ENCODE measurements at regions of chr5 and their contacts with region 1.

Region 1: DNA sequence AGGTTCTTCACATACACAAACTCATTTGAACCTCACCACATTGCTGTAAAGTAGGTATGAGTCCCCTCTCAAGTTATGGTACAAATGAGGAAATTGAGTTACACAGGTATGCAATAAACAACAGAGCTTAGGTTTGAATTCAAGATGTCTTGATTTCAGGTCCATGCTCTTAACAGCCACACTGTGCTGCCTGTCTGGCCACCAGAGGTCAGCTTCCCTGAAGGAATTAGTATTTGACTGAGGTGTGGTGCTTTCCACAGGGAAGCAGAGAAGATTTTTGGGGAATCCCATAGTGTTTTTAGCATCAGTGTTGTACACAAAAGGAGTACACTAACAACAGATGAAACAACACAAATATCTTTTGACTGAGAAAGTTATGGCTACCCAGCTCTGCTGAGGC is 94.4 kb upstream of the ITGA1 start:
- DNase-seq: peak; percentile 56
- H3K4me3 ChIP-seq: no peak overlapping the region
- H3K27ac ChIP-seq: no peak overlapping the region
- H3K4me1 ChIP-seq: no peaks in the 10 kb centered on the region
- H3K27me3 ChIP-seq: peaks cover 2% of the 10 kb centered on the region in 2 experiments
- CTCF ChIP-seq: peak; percentile 52 to 64
- POLR2A ChIP-seq: no peak

Region 2: DNA sequence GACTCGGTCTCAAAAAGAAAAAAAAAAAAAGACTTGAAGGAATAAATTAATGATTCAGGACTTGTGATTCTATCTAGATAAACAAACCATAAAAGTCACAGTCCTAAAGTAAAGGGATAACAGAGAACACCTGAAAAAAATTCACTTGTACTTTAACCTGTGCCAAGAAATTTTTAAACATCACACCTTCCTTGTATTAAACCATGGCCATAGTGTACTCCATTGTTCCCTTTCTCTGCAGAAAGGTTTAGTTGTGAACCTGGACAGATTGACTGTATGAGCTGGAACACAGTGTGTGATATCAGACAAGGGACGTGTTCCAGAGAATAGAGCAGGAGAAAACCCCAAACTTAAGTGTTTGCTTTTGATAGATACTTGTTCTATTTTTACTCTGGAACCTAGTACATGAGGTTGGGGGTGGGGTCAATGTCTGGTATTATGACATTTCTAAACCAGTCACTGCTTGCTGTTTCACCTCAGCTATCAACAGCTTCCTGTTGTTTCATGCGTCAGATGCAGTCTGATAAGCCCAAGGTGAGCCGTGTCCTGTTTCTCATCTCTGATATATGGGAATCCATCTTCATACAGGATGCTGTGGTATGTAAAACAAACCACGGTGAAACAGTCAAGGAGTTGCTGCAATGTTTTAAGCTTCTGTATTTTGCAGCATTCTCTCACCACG is 31.9 kb after region 1 on chr5:
- CTCF ChIA-PET with region 1: interaction called, 18 read pairs
- POLR2A ChIA-PET with region 1: no interaction called
- dilution Hi-C with region 1: no loop called
- intact Hi-C with region 1: no loop called
- DNase-seq: no peak
- H3K4me3 ChIP-seq: no peak overlapping the region
- H3K27ac ChIP-seq: peak overlapping the region; percentile 34
- H3K4me1 ChIP-seq: peaks cover 34% of the 10 kb centered on the region
- H3K27me3 ChIP-seq: no peaks in the 10 kb centered on the region
- CTCF ChIP-seq: no peak
- POLR2A ChIP-seq: no peak

Region 3: DNA sequence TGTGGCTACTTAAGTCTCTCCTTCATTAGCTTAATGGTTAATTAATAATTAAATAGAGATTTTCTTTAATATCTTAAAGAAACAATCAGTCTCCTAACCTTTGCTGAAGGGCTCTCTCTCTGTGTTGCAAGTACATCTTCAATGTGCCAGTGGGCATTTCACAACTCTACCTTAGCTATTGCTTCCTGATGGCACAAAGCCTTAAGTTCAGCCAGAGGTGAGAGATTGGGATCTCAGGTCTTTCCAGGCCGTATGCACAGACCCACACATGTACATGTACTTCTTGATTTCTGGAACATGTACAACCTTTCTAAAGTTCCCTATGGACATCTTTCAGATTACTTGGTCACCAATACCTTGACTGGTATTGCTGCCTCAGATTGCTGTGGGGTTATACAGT is 85.5 kb after region 1 on chr5:
- CTCF ChIA-PET with region 1: interaction called, 10 read pairs
- POLR2A ChIA-PET with region 1: no interaction called
- dilution Hi-C with region 1: no loop called
- intact Hi-C with region 1: no loop called
- DNase-seq: no peak
- H3K4me3 ChIP-seq: no peak overlapping the region
- H3K27ac ChIP-seq: no peak overlapping the region
- H3K4me1 ChIP-seq: no peaks in the 10 kb centered on the region
- H3K27me3 ChIP-seq: no peaks in the 10 kb centered on the region
- CTCF ChIP-seq: no peak
- POLR2A ChIP-seq: no peak

Region 4: GRCh38 chr5:52909192-52909591 is 215.9 kb after region 1 on chr5:
- CTCF ChIA-PET with region 1: interaction called, 96 read pairs
- POLR2A ChIA-PET with region 1: no interaction called
- dilution Hi-C with region 1: no loop called
- intact Hi-C with region 1: no loop called
- DNase-seq: no peak
- H3K4me3 ChIP-seq: no peak overlapping the region
- H3K27ac ChIP-seq: no peak overlapping the region
- H3K4me1 ChIP-seq: no peaks in the 10 kb centered on the region
- H3K27me3 ChIP-seq: no peaks in the 10 kb centered on the region
- CTCF ChIP-seq: no peak
- POLR2A ChIP-seq: no peak

Region 5: GRCh38 chr5:53095931-53096525 is 402.7 kb after region 1 on chr5:
- CTCF ChIA-PET with region 1: no interaction called
- POLR2A ChIA-PET with region 1: no interaction called
- dilution Hi-C with region 1: no loop called
- intact Hi-C with region 1: loop called (anchors 10 kb)
- DNase-seq: peak; percentile 85
- H3K4me3 ChIP-seq: no peak overlapping the region
- H3K27ac ChIP-seq: no peak overlapping the region
- H3K4me1 ChIP-seq: peaks cover 10% of the 10 kb centered on the region
- H3K27me3 ChIP-seq: no peaks in the 10 kb centered on the region
- CTCF ChIP-seq: peak; percentile 54 to 63
- POLR2A ChIP-seq: no peak

Measured in endothelial cell of umbilical vein (primary cell).